ENCODE measurements at regions of chr12 and their contacts with region 1.

Region 1: DNA sequence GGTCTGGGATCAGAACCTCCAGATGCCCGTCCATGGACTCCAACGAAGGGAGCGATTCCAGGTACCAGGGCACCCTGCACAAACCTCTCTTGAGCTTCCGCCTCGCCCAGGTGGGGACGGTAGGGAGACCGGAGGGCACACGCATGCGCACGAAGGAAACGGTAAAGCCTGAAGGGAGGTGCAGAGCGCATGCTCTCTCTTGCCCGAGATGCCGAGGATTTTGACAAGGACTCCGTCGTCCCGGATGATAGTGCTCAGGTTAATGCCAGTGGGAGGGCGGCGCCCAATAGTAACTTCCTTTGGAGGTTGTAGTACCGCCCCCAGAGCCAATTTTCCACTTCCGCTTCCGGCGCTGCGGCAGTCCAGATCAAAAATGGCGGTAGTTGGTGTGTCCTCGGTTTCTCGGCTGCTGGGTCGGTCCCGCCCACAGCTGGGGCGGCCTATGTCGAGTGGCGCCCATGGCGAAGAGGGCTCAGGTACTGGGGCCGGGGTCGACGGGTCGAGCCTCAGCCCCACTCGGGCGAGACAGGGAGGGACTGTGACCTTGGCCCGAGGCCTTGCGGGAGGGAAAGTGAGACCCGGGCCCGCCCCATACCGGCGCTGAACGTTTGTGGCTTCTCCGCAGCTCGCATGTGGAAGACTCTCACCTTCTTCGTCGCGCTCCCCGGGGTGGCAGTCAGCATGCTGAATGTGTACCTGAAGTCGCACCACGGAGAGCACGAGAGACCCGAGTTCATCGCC is at the start of gene COX6A1:
- DNase-seq: peak; percentile 99
- H3K4me3 Mint-ChIP-seq: peak within 1 kb of the TSS; percentile 92
- H3K27ac Mint-ChIP-seq: peak within 1 kb of the TSS; percentile 93
- H3K4me1 Mint-ChIP-seq: peaks cover 22% of the 10 kb centered on the region
- H3K27me3 Mint-ChIP-seq: no peaks in the 10 kb centered on the region
- total RNA-seq, gene COX6A1: 536 to 540 TPM

Region 2: GRCh38 chr12:120292661-120293531 is 145.0 kb before region 1 on chr12 and contains the start of gene RNU4-1:
- CTCF ChIA-PET with region 1: no interaction called
- intact Hi-C with region 1: loop called (anchors 1 kb)
- DNase-seq: peak; percentile 88
- H3K4me3 Mint-ChIP-seq: no peak within 1 kb of the TSS
- H3K27ac Mint-ChIP-seq: no peak within 1 kb of the TSS
- H3K4me1 Mint-ChIP-seq: peaks cover 6% of the 10 kb centered on the region
- H3K27me3 Mint-ChIP-seq: no peaks in the 10 kb centered on the region
- total RNA-seq, gene RNU4-1: 685 to 1,294 TPM

Region 3: GRCh38 chr12:120317224-120318105 is 120.5 kb before region 1 on chr12:
- CTCF ChIA-PET with region 1: interaction called, 4 read pairs
- intact Hi-C with region 1: loop called (anchors 1 kb)
- DNase-seq: peak; percentile 100
- H3K4me3 Mint-ChIP-seq: peak overlapping the region; percentile 87
- H3K27ac Mint-ChIP-seq: peak overlapping the region; percentile 88
- H3K4me1 Mint-ChIP-seq: peaks cover 11% of the 10 kb centered on the region
- H3K27me3 Mint-ChIP-seq: no peaks in the 10 kb centered on the region

Region 4: GRCh38 chr12:120469450-120470149 is 31.7 kb after region 1 on chr12 and contains the start of gene SRSF9:
- CTCF ChIA-PET with region 1: interaction called, 15 read pairs
- intact Hi-C with region 1: loop called (anchors 1 kb)
- DNase-seq: peak; percentile 96
- H3K4me3 Mint-ChIP-seq: peak within 1 kb of the TSS; percentile 90
- H3K27ac Mint-ChIP-seq: peak within 1 kb of the TSS; percentile 87
- H3K4me1 Mint-ChIP-seq: peaks cover 37% of the 10 kb centered on the region
- H3K27me3 Mint-ChIP-seq: no peaks in the 10 kb centered on the region
- total RNA-seq, gene SRSF9: 164 to 171 TPM

Region 5: GRCh38 chr12:120534203-120534702 is 96.3 kb after region 1 on chr12 and contains the start of gene RNF10:
- CTCF ChIA-PET with region 1: interaction called, 4 read pairs
- intact Hi-C with region 1: loop called (anchors 1 kb)
- DNase-seq: peak; percentile 78
- H3K4me3 Mint-ChIP-seq: peak within 1 kb of the TSS; percentile 92
- H3K27ac Mint-ChIP-seq: peak within 1 kb of the TSS; percentile 94
- H3K4me1 Mint-ChIP-seq: peaks cover 47% of the 10 kb centered on the region
- H3K27me3 Mint-ChIP-seq: no peaks in the 10 kb centered on the region
- total RNA-seq, gene RNF10: 159 to 166 TPM

Region 6: DNA sequence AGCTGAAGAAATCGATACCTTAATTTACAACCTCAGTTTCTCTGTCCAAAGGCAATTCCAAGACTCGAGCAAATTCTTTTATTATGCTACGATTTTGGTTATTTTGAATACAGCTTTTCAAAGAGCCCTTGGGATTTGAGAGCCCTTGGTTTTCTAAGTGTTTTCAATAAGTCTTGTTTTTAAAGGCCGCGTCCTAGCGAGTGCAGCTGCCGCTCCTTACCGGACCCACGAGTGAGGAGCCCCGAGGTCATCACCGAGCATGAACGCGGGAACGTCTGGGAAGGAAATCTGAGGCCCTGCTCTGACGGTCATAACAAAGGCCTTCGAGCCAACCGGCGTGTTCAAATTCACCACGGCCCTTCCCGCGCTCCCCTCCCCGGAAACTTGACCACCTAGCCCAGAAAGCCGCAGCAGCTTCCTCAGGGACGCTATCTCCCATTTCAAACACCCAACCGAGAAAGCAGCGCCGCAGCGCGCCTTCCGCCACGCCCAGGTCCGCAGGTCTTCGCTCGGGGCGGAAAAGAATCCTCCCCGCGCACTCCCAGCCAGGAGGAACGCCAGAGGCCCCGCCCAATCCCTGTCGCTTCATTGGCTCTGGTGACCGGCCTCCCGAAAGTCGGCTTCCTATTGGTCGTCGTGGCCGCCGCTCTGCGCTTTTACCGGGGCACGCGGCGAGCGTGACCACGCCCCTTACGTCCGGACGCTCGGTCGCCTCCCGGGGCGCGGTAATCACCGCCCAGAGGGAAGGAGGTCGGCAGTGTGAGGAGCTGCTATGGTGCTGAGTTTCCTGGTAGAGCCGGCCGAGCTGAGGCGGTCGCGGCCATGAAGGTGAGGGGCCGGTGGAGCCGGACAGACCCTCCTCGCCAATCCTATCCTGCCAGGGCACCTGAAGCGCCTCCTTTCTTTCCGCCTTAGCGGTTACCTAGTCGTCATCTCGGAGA is 961.7 kb after region 1 on chr12 and contains the start of gene RNF34:
- CTCF ChIA-PET with region 1: no interaction called
- intact Hi-C with region 1: no loop called
- DNase-seq: peak; percentile 99
- H3K4me3 Mint-ChIP-seq: peak within 1 kb of the TSS; percentile 87
- H3K27ac Mint-ChIP-seq: peak within 1 kb of the TSS; percentile 93
- H3K4me1 Mint-ChIP-seq: peaks cover 32% of the 10 kb centered on the region
- H3K27me3 Mint-ChIP-seq: no peaks in the 10 kb centered on the region
- total RNA-seq, gene RNF34: 54.1 to 57.0 TPM